ENCODE measurements at regions of chrX and their contacts with region 1.

Region 1: DNA sequence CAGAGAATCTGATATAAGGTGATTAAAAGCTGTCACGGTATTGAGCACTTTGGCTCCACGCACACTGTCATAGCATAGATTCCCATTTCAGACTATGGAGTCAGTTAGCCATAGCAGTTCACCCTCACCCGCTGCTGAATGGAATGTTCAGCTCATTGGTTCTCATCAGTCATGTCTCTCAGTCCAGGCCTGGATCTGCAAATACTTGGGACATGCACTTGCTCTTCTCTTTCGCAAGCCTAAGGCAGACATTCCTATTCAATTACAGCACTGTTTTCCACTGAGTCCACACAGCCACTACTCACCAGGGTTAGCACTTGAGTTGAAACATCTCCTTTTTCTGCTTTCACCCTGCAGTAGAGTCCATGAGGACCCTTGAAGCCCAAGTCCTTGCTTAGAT is 30.6 kb upstream of the SCML1 start:
- DNase-seq: peak; percentile 89
- ATAC-seq: peak; percentile 86
- H3K4me3 ChIP-seq: no peak overlapping the region
- H3K27ac ChIP-seq: peak overlapping the region; percentile 51
- H3K4me1 ChIP-seq: peaks cover 54% of the 10 kb centered on the region
- H3K27me3 ChIP-seq: no peaks in the 10 kb centered on the region
- CTCF ChIP-seq: no peak
- EP300 ChIP-seq: peak in 1 of 2 experiments; percentile 32; a peak in 1 of 4 replicates
- POLR2A ChIP-seq: no peak
- RAD21 ChIP-seq: no peak

Region 2: DNA sequence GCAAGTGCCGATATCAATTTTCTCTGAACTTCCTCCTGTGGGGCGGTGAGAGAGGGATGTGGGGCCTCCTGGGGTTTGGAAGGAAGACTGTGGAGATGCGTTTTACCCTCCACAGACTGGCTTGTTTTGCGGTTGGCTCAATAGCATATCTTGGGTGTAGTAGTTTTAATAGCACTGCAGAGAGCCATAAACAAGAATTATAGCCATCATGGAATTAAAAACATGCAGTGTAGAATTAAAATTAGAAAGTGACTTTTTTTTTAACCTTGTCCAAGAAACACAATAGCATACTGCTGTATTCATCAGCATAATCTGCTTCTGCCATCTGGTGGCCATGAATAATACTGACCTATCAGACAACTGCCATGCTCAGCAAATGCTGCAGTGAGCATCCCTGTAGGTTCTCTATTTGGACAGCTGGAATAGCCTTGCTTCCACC is 16.7 kb before region 1 on chrX:
- CTCF ChIA-PET with region 1: no interaction called
- POLR2A ChIA-PET with region 1: no interaction called
- in situ Hi-C with region 1: no loop called
- intact Hi-C with region 1: no loop called
- DNase-seq: peak; percentile 35
- ATAC-seq: peak; percentile 81
- H3K4me3 ChIP-seq: no peak overlapping the region
- H3K27ac ChIP-seq: no peak overlapping the region
- H3K4me1 ChIP-seq: no peaks in the 10 kb centered on the region
- H3K27me3 ChIP-seq: no peaks in the 10 kb centered on the region
- CTCF ChIP-seq: peak; percentile 66
- EP300 ChIP-seq: no peak
- POLR2A ChIP-seq: no peak
- RAD21 ChIP-seq: no peak

Region 3: DNA sequence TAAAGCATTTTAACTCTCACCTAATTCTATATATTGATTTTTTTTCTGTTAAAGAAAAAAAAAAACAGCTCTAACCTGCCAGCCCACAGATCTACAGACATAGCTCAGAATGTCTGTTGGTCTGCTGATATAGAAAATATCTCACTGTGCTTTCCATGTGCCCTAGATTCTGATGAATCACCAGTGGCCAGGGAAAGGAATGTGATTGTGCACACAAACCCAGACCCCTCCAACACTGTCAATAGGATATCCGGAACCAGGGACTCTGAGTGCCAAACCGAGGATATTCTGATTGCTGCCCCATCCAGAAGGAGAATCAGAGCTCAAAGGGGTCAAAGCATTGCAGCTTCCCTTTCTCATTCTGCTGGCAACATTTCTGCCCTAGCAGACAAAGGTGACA is 18.5 kb after region 1 on chrX:
- CTCF ChIA-PET with region 1: no interaction called
- POLR2A ChIA-PET with region 1: no interaction called
- in situ Hi-C with region 1: no loop called
- intact Hi-C with region 1: loop called (anchors 1 kb)
- DNase-seq: peak; percentile 51
- ATAC-seq: peak; percentile 66
- H3K4me3 ChIP-seq: no peak overlapping the region
- H3K27ac ChIP-seq: no peak overlapping the region
- H3K4me1 ChIP-seq: peaks cover 8% of the 10 kb centered on the region
- H3K27me3 ChIP-seq: no peaks in the 10 kb centered on the region
- CTCF ChIP-seq: no peak
- EP300 ChIP-seq: no peak
- POLR2A ChIP-seq: no peak
- RAD21 ChIP-seq: no peak

Region 4: GRCh38 chrX:17736856-17737706 is 30.4 kb after region 1 on chrX and contains the start of gene SCML1:
- CTCF ChIA-PET with region 1: no interaction called
- POLR2A ChIA-PET with region 1: interaction called, 12 read pairs
- in situ Hi-C with region 1: no loop called
- intact Hi-C with region 1: loop called (anchors 1 kb)
- DNase-seq: peak; percentile 94
- ATAC-seq: peak; percentile 81
- H3K4me3 ChIP-seq: peak within 1 kb of the TSS; percentile 79 to 82 (median 81)
- H3K27ac ChIP-seq: peak within 1 kb of the TSS; percentile 94
- H3K4me1 ChIP-seq: peaks cover 54% of the 10 kb centered on the region
- H3K27me3 ChIP-seq: no peaks in the 10 kb centered on the region
- CTCF ChIP-seq: no peak
- EP300 ChIP-seq: no peak
- POLR2A ChIP-seq: peak; percentile 65 to 69
- RAD21 ChIP-seq: no peak
- total RNA-seq, gene SCML1: 24.2 and 29.0 TPM in 2 replicates